Mammary epithelial cell (primary cell): ENCODE measurements at regions of chr17 and their contacts with region 1.

Region 1: DNA sequence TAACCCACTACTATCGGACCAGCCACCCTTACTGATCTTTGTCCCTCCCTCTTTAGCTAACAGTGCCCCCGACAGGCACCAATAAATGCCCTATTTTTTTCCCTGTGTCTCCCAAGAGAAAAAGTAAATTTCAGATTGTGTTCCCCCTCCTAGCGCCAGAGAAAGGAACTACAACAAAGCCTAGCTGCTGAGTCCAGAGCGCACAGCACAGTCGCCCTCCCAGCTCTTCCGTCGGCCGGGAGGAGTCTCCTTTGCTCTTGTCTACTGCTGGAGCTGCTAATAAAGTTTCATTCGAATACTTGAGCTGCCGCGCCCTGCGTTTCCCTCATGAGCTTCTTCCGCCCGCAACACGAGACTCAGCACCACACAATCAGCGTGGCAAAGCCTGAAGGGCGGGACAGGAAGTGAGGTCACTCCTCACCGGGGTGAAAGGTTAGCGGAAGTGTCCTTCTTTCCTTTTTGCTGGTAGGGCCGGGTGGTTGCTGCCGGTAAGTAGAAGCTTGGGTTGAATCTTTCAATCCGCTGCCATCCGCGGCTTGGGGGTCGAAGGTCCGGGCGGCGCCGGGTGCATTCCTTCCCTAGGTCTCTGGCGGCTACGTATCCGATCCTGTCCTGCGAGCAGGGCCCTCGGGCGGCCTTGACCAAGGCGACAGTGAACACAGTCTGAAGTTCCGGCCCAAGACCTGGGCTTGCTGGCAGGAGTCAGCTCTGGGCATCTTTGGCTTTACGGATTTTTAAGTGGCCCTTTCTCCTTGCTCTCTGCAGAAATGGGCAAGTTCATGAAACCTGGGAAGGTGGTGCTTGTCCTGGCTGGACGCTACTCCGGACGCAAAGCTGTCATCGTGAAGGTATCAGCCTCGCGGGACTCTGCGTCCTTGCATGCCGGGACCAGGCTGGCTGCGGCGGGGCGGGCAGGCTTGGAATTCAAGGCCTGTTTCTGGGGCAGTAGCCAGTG is at the start of gene RPL27:
- DNase-seq: peak; percentile 100
- H3K4me3 ChIP-seq: peak within 1 kb of the TSS; percentile 55 to 95 (median 60)
- H3K27ac ChIP-seq: peak within 1 kb of the TSS; percentile 85
- H3K4me1 ChIP-seq: peaks cover 20% of the 10 kb centered on the region
- H3K27me3 ChIP-seq: no peaks in the 10 kb centered on the region
- CTCF ChIP-seq: peak; percentile 81 to 82
- total RNA-seq, gene RPL27: 634 to 1,021 TPM

Region 2: GRCh38 chr17:42843358-42843934 is 154.8 kb before region 1 on chr17:
- CTCF ChIA-PET with region 1: interaction called, 5 read pairs
- dilution Hi-C with region 1: no loop called
- in situ Hi-C with region 1: no loop called
- intact Hi-C with region 1: loop called (anchors 1 kb)
- DNase-seq: peak; percentile 42
- H3K4me3 ChIP-seq: no peak overlapping the region
- H3K27ac ChIP-seq: no peak overlapping the region
- H3K4me1 ChIP-seq: peaks cover 6% of the 10 kb centered on the region
- H3K27me3 ChIP-seq: no peaks in the 10 kb centered on the region
- CTCF ChIP-seq: peak; percentile 98

Region 3: DNA sequence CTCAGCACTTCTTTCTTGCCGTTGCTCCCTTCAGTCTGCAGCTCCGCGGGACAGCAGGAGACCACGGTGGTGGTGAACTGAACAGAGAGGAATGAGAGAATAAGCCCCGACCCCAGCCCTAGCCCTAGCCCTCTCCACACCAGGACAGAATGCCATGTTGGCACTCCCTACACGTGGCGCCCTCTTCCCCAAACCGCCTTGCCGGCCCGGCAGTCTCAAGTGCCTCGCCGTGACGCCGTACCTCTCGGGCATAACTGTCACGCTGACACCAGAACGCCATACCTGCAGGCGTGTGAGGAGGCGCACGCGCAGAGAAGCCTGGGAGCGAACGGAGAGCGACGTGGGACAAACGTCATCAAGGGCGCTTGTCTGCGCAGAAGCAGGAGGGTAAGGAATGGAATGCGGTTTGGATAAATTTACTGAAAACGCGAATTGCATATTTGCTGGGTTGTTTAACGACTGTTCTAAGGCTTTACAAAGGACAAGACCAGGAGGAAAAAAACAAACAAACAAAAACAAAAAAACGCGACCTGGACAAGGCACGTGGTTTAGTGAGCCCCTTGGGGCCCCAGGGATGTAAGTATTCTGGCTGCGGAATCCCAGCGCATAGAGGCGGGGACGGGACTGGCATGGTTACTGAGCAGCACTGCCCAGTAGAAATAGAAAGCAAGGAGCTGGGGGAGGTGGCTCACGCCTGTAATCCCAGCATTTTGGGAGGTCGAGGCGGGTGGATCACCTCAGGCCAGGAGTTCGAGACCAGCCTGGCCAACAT is 33.9 kb before region 1 on chr17 and contains the start of gene AARSD1:
- CTCF ChIA-PET with region 1: no interaction called
- dilution Hi-C with region 1: no loop called
- in situ Hi-C with region 1: no loop called
- intact Hi-C with region 1: loop called (anchors 1 kb)
- DNase-seq: peak; percentile 90
- H3K4me3 ChIP-seq: peak within 1 kb of the TSS; percentile 58 to 66 (median 61)
- H3K27ac ChIP-seq: peak within 1 kb of the TSS; percentile 39
- H3K4me1 ChIP-seq: peaks cover 14% of the 10 kb centered on the region
- H3K27me3 ChIP-seq: no peaks in the 10 kb centered on the region
- CTCF ChIP-seq: no peak
- total RNA-seq, gene AARSD1: 15.7 to 53.0 TPM

Region 4: GRCh38 chr17:42980398-42981397 is 17.6 kb before region 1 on chr17 and contains the start of gene RUNDC1:
- CTCF ChIA-PET with region 1: no interaction called
- dilution Hi-C with region 1: no loop called
- in situ Hi-C with region 1: no loop called
- intact Hi-C with region 1: loop called (anchors 1 kb)
- DNase-seq: peak; percentile 83
- H3K4me3 ChIP-seq: peak within 1 kb of the TSS; percentile 57 to 89 (median 75)
- H3K27ac ChIP-seq: peak within 1 kb of the TSS; percentile 83
- H3K4me1 ChIP-seq: peaks cover 18% of the 10 kb centered on the region
- H3K27me3 ChIP-seq: no peaks in the 10 kb centered on the region
- CTCF ChIP-seq: peak; percentile 9 to 39
- total RNA-seq, gene RUNDC1: 14.5 to 16.2 TPM

Region 5: GRCh38 chr17:43042025-43042628 is 43.9 kb after region 1 on chr17:
- CTCF ChIA-PET with region 1: no interaction called
- dilution Hi-C with region 1: loop called (anchors 5 kb)
- in situ Hi-C with region 1: no loop called
- intact Hi-C with region 1: no loop called
- DNase-seq: no peak
- H3K4me3 ChIP-seq: no peak overlapping the region
- H3K27ac ChIP-seq: no peak overlapping the region
- H3K4me1 ChIP-seq: no peaks in the 10 kb centered on the region
- H3K27me3 ChIP-seq: no peaks in the 10 kb centered on the region
- CTCF ChIP-seq: no peak

Region 6: DNA sequence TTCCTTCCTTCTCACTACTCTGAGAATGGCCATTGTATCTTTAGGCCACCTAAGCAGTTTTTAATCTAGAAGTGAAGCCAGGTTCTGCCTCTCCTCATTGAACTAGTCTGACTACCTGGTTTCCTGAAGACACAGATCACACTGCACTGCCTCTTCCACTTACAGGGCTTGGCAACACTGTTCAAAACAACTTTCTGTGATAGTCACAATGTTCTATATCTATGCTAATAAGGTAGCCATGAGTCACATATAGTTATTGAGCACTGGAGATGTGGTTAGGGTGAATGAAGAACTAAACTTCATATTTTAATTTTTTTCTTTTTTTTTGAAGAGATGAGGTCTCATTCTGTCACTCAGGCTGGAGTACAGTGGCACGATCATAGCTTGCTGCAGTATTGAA is 53.7 kb after region 1 on chr17:
- CTCF ChIA-PET with region 1: no interaction called
- dilution Hi-C with region 1: no loop called
- in situ Hi-C with region 1: no loop called
- intact Hi-C with region 1: loop called (anchors 2 kb)
- DNase-seq: no peak
- H3K4me3 ChIP-seq: no peak overlapping the region
- H3K27ac ChIP-seq: no peak overlapping the region
- H3K4me1 ChIP-seq: no peaks in the 10 kb centered on the region
- H3K27me3 ChIP-seq: no peaks in the 10 kb centered on the region
- CTCF ChIP-seq: no peak

Region 7: GRCh38 chr17:43125133-43125966 is 127.1 kb after region 1 on chr17 and contains the start of gene BRCA1:
- CTCF ChIA-PET with region 1: no interaction called
- dilution Hi-C with region 1: no loop called
- in situ Hi-C with region 1: no loop called
- intact Hi-C with region 1: loop called (anchors 2 kb)
- DNase-seq: peak; percentile 99
- H3K4me3 ChIP-seq: peak within 1 kb of the TSS; percentile 78 to 89 (median 80)
- H3K27ac ChIP-seq: peak within 1 kb of the TSS; percentile 92
- H3K4me1 ChIP-seq: peaks cover 22% of the 10 kb centered on the region
- H3K27me3 ChIP-seq: no peaks in the 10 kb centered on the region
- CTCF ChIP-seq: no peak
- total RNA-seq, gene BRCA1: 5.5 to 35.8 TPM